GM12878 (cell line): ENCODE measurements at regions of chr14 and their contacts with region 1.

Region 1: DNA sequence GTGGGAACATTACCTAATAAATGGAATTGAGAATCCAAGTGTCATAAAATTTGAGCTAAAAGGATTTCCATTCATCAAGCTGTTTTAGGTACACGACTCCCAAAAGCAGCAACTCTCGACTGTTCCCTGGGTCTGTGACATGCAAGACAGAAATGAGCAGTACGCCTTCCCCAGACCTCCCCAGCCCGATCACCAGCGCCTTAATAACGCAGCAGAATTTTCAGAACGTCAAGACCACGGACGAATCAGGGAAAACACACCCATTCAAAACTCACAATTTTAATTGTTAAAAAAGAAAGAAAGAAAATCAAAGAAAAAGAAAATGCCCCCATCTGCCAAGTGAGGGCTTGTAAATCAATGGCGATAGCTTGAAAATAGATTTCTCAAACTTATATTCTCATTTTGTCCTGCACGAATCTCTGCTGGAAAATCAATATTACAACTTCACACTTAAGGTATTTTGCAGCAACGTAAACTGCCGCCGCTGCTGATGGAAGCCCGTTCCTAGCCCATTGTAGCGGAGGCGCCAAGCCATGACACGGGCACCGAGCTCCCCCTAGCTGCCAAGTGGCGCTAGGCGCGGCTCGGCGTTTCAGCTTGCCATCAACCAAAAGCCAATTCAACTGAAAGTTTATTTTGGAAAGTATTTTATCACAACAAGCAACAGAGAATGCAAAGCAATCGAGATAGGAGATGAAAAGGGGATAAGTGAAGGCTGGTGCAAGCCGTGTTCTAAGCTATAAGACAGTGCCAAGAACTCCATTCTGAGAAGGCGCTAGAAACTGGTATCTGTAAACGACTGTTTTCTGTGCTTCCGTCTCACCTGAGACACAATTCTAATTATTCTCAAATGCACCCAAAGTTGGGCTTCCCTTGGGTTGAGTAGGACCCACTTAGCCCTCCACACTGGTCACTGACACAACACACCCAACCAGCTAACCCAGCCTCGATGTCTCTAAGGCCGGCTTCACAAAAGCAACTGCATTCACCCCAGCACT is 5.5 kb downstream of the BCL11B start:
- DNase-seq: no peak
- ATAC-seq: peak; percentile 82
- H3K4me3 ChIP-seq: no peak overlapping the region
- H3K27ac ChIP-seq: no peak overlapping the region
- H3K4me1 ChIP-seq: no peaks in the 10 kb centered on the region
- H3K27me3 ChIP-seq: peaks cover 11 to 13% of the 10 kb centered on the region in 2 experiments
- CTCF ChIP-seq: peak; percentile 98 to 99 (median 98); a peak in 5 of 6 replicates
- EP300 ChIP-seq: no peak
- POLR2A ChIP-seq: no peak
- RAD21 ChIP-seq: peak; percentile 97

Region 2: GRCh38 chr14:97707603-97708002 is 1558.9 kb before region 1 on chr14:
- CTCF ChIA-PET with region 1: no interaction called
- POLR2A ChIA-PET with region 1: no interaction called
- RAD21 ChIA-PET with region 1: interaction called, 3 read pairs
- SMC1A ChIA-PET with region 1: no interaction called
- in situ Hi-C with region 1: loop called (anchors 10 kb)
- intact Hi-C with region 1: loop called (anchors 10 kb)
- DNase-seq: peak; percentile 40
- ATAC-seq: peak; percentile 77
- H3K4me3 ChIP-seq: no peak overlapping the region
- H3K27ac ChIP-seq: no peak overlapping the region
- H3K4me1 ChIP-seq: peaks cover 7% of the 10 kb centered on the region
- H3K27me3 ChIP-seq: no peaks in the 10 kb centered on the region
- CTCF ChIP-seq: peak; percentile 2 to 17 (median 9); a peak in 1 of 6 replicates
- EP300 ChIP-seq: 0 out of 4 replicates have a peak, but pooled peaks of 1 of the 2 experiments have one; percentile 45
- POLR2A ChIP-seq: no peak
- RAD21 ChIP-seq: peak; percentile 55

Region 3: DNA sequence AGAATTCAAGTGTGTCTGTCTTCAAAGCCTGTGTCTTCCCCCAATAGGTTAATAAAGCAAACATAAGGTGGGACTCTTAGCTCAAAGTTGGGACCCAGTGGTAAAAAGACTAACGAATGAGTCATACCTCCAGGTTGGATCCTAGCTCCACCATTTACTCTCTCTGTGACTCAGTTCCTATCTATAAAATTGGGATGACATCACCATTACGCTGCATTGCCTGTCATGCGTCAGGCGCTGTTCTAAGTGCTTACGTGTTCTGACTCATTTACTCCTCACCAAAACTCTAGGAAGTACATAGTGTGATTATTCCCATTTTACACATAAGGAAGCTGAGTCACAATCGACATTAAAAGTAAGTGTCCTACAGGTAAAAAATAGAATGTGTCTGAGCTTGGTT is 1553.5 kb before region 1 on chr14:
- CTCF ChIA-PET with region 1: no interaction called
- POLR2A ChIA-PET with region 1: no interaction called
- RAD21 ChIA-PET with region 1: interaction called, 3 read pairs
- SMC1A ChIA-PET with region 1: no interaction called
- in situ Hi-C with region 1: loop called (anchors 10 kb)
- intact Hi-C with region 1: loop called (anchors 10 kb)
- DNase-seq: no peak
- ATAC-seq: no peak
- H3K4me3 ChIP-seq: no peak overlapping the region
- H3K27ac ChIP-seq: no peak overlapping the region
- H3K4me1 ChIP-seq: no peaks in the 10 kb centered on the region
- H3K27me3 ChIP-seq: no peaks in the 10 kb centered on the region
- CTCF ChIP-seq: no peak
- EP300 ChIP-seq: no peak
- POLR2A ChIP-seq: no peak
- RAD21 ChIP-seq: no peak

Region 4: DNA sequence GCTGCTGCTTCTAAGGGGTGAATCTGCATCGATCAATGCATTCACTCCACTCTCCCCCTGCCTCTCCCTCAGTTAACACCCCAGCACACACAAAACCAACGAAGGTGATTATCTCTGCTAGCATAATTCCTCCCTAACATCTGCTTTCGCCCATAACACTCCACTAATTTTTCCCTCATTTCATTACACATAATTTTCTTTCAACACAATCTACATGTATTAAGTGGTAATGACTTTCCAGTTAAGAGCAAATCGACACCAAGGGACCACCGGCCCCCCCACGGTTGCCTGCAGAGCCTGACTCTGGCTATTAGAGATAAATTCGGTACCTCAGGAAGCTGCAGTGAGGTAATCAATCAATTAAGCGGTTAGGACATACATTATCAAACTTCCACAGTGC is 1110.1 kb before region 1 on chr14:
- CTCF ChIA-PET with region 1: no interaction called
- POLR2A ChIA-PET with region 1: no interaction called
- RAD21 ChIA-PET with region 1: no interaction called
- SMC1A ChIA-PET with region 1: no interaction called
- in situ Hi-C with region 1: no loop called
- intact Hi-C with region 1: no loop called
- DNase-seq: no peak
- ATAC-seq: no peak
- H3K4me3 ChIP-seq: no peak overlapping the region
- H3K27ac ChIP-seq: no peak overlapping the region
- H3K4me1 ChIP-seq: no peaks in the 10 kb centered on the region
- H3K27me3 ChIP-seq: no peaks in the 10 kb centered on the region
- CTCF ChIP-seq: no peak
- EP300 ChIP-seq: no peak
- POLR2A ChIP-seq: no peak
- RAD21 ChIP-seq: no peak

Region 5: DNA sequence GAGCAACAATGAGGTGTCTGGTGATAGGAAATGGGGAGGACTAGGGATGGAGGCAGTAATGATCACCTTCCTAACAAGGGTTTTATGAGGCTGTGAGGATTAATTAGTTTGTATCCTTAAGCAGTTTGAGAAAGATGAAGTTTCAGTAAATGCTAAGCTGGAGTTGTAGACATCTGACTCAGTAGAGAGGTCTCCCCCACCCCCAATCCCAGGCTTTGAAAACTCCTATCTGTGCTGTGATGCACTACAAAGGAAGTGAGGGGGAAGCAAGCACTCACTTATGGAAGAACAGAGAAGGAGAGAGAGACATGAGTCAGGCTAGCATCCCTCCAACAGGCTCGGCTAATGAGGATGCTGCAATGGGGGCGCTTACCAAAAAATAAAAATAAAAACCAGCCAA is 11.1 kb after region 1 on chr14:
- CTCF ChIA-PET with region 1: interaction called, 11 read pairs
- POLR2A ChIA-PET with region 1: no interaction called
- RAD21 ChIA-PET with region 1: interaction called, 9 read pairs
- SMC1A ChIA-PET with region 1: interaction called, 7 read pairs
- in situ Hi-C with region 1: no loop called
- intact Hi-C with region 1: no loop called
- DNase-seq: no peak
- ATAC-seq: no peak
- H3K4me3 ChIP-seq: no peak overlapping the region
- H3K27ac ChIP-seq: no peak overlapping the region
- H3K4me1 ChIP-seq: peaks cover 11% of the 10 kb centered on the region
- H3K27me3 ChIP-seq: peaks cover 1 to 24% of the 10 kb centered on the region in 2 experiments
- CTCF ChIP-seq: no peak
- EP300 ChIP-seq: no peak
- POLR2A ChIP-seq: no peak
- RAD21 ChIP-seq: no peak

Region 6: DNA sequence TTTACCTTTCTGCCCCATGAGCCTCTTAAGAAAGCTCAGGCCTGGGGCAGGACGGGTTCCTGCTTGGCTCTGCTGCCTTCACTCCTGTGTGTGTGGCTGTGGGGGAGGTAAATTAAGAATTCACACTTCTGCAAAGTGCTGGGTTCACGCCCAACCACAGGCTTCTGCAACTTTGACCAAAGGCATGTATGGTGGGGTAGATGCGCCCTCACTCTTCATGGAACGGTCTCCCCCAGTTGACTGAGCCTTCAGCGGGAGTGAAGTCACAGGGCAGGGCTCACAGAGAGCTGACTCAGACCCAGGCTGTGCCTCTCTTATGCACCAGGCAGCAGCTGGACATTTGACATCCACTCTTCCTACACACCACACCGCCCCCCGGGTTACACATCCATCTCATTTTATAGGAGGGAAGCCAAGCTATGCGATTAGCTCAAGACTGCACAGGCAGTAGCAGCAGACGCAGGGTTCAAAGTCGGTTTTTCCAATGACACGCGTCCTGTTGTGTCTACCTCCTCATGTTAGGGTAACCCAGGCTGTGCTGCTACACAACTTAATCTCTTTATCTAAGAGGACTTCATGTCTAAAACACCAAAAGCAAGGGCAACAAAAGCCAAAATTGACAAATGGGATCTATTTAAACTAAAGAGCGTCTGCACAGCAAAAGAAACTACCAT is 20.9 kb after region 1 on chr14:
- CTCF ChIA-PET with region 1: interaction called, 17 read pairs
- POLR2A ChIA-PET with region 1: no interaction called
- RAD21 ChIA-PET with region 1: interaction called, 9 read pairs
- SMC1A ChIA-PET with region 1: interaction called, 20 read pairs
- in situ Hi-C with region 1: no loop called
- intact Hi-C with region 1: no loop called
- DNase-seq: peak; percentile 55
- ATAC-seq: peak; percentile 94
- H3K4me3 ChIP-seq: peak overlapping the region; percentile 55
- H3K27ac ChIP-seq: peak overlapping the region; percentile 78
- H3K4me1 ChIP-seq: peaks cover 31% of the 10 kb centered on the region
- H3K27me3 ChIP-seq: no peaks in the 10 kb centered on the region
- CTCF ChIP-seq: no peak
- EP300 ChIP-seq: no peak
- POLR2A ChIP-seq: no peak
- RAD21 ChIP-seq: no peak

Region 7: DNA sequence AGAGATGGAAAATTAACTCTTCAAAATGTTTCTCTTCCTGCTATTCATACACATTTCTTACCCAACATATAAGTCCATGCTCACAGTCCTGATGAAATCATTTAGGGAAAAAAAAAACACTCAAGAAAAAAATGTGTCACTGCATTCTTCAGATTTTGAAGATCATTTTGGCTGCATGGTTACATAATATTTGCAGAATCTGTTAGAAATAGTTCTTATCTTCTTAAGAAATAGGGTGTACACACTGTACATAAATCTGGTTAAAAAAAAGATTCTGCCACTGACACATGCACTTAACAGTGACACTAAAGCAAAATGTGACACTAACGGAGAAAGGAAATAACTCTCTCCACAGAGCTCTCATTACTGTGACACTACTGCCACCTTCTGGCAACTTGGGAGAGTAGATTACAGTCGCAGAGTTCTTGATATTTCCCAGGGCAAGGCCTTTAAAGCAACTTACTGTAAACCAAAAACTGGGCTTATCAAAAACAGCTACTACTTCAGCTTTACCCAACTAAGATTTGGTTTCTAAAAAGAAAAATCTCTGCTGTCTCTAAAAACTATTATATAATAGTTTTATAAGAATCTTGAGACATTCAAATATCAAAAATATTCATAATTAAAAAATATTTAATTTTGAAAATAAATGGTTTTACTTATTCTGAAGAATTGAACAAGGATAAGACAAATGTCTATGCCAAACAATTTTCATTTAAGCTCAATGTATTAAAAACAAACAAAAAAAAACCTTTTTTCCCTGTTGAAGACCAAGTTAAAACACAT is 149.2 kb after region 1 on chr14:
- CTCF ChIA-PET with region 1: interaction called, 4 read pairs
- POLR2A ChIA-PET with region 1: no interaction called
- RAD21 ChIA-PET with region 1: interaction called, 9 read pairs
- SMC1A ChIA-PET with region 1: interaction called, 9 read pairs
- in situ Hi-C with region 1: no loop called
- intact Hi-C with region 1: loop called (anchors 2 kb)
- DNase-seq: peak; percentile 55
- ATAC-seq: peak; percentile 97
- H3K4me3 ChIP-seq: no peak overlapping the region
- H3K27ac ChIP-seq: no peak overlapping the region
- H3K4me1 ChIP-seq: peaks cover 5% of the 10 kb centered on the region; the same call in 1 of the 2 replicates
- H3K27me3 ChIP-seq: no peaks in the 10 kb centered on the region
- CTCF ChIP-seq: peak; percentile 75 to 86 (median 79)
- EP300 ChIP-seq: no peak
- POLR2A ChIP-seq: no peak
- RAD21 ChIP-seq: peak; percentile 91